CD8-positive, alpha-beta T cell (primary cell): ENCODE measurements at regions of chr5 and their contacts with region 1.

Region 1: DNA sequence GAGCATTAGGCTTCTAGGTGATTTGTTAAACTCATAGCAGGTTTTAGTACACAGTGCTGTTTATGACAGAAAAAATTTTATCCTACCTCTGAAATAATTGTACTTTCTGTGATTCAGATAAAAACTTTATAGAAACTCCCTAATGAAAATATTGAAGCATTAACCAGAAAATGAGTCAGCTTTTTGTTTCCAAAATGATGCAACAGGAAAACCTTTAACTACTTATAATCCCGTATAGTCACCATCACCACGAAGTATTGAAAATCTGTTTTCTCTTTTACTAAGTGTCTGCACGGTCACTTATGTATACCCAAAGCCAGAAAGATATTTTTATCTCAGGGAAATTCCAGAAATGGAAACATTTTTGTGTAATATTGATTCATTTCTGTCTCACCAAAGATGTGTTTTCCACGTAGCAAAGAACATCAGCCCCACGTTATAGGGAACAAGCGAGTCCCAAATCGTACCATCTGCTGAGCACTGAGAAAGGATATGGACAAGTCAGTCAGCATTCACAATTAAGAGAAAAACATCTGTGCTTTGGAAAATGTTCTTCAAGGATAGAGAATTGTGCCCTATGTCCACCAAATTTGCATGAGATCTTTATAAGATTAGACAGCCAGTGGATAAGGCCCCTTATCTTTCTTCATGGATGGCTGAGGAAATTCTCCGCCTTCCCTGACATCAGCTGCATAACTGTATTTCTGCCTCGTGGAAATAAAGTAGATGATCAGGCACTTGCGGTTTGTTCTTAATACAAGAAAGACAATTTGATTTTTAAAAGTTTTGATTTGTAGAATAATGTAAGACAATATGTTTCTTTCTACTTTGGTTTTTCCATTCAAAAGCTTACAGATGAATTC is 41.9 kb downstream of the TNFAIP8 start:
- DNase-seq: peak in 1 of 9 experiments; percentile 35
- ATAC-seq: peak; percentile 20
- H3K4me3 ChIP-seq: no peak overlapping the region
- H3K4me3 Mint-ChIP-seq: no peak overlapping the region
- H3K27ac ChIP-seq: no peak overlapping the region
- H3K27ac Mint-ChIP-seq: peak overlapping the region; percentile 83
- H3K4me1 ChIP-seq: peaks cover 5% of the 10 kb centered on the region
- H3K4me1 Mint-ChIP-seq: peaks cover 56% of the 10 kb centered on the region
- H3K27me3 ChIP-seq: no peaks in the 10 kb centered on the region
- H3K27me3 Mint-ChIP-seq: no peaks in the 10 kb centered on the region
- CTCF ChIP-seq: no peak

Region 2: GRCh38 chr5:119355685-119356611 is 41.8 kb before region 1 on chr5 and contains the start of gene TNFAIP8:
- CTCF ChIA-PET with region 1: no interaction called
- POLR2A ChIA-PET with region 1: no interaction called
- intact Hi-C with region 1: loop called in 1 of 2 experiments (anchors 5 kb)
- DNase-seq: peak in 6 of 9 experiments; percentile 43 to 76 (median 55)
- ATAC-seq: peak; percentile 37
- H3K4me3 ChIP-seq: peak within 1 kb of the TSS; percentile 38 to 52
- H3K4me3 Mint-ChIP-seq: peak within 1 kb of the TSS; percentile 88
- H3K27ac ChIP-seq: peak within 1 kb of the TSS in 1 of 2 experiments; percentile 62
- H3K27ac Mint-ChIP-seq: peak within 1 kb of the TSS; percentile 95
- H3K4me1 ChIP-seq: peaks cover 84% of the 10 kb centered on the region
- H3K4me1 Mint-ChIP-seq: peaks cover 91% of the 10 kb centered on the region
- H3K27me3 ChIP-seq: no peaks in the 10 kb centered on the region
- H3K27me3 Mint-ChIP-seq: no peaks in the 10 kb centered on the region
- CTCF ChIP-seq: no peak
- total RNA-seq, gene TNFAIP8: 62.3 to 63.0 TPM

Region 3: DNA sequence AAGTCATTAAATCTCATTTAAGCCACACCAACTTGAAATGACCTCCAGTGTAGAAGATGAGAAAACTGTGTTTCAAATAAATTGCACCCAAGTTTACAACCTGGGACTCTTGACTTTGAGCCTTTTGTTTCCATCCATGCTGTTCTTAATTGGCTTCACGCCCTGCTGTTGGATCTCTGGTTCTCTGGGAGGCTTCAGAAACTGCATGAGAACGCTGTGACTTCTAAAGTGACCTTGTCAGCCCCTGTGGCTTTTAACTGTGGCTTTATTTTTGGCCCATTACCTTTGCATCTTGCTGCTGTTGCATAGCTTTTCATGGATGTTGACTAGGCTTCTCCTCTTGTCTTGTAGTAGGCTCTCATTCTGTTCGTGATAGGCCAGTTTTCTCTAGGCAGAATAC is 12.6 kb before region 1 on chr5:
- CTCF ChIA-PET with region 1: interaction called, 4 read pairs
- POLR2A ChIA-PET with region 1: interaction called, 3 read pairs
- intact Hi-C with region 1: loop called in 1 of 2 experiments (anchors 2 kb)
- DNase-seq: no peak
- ATAC-seq: no peak
- H3K4me3 ChIP-seq: no peak overlapping the region
- H3K4me3 Mint-ChIP-seq: no peak overlapping the region
- H3K27ac ChIP-seq: peak overlapping the region in 1 of 2 experiments; percentile 9
- H3K27ac Mint-ChIP-seq: peak overlapping the region; percentile 78
- H3K4me1 ChIP-seq: peaks cover 63% of the 10 kb centered on the region
- H3K4me1 Mint-ChIP-seq: peaks cover 84% of the 10 kb centered on the region
- H3K27me3 ChIP-seq: no peaks in the 10 kb centered on the region
- H3K27me3 Mint-ChIP-seq: no peaks in the 10 kb centered on the region
- CTCF ChIP-seq: no peak